ENCODE measurements at regions of chr14 and their contacts with region 1.

Region 1: DNA sequence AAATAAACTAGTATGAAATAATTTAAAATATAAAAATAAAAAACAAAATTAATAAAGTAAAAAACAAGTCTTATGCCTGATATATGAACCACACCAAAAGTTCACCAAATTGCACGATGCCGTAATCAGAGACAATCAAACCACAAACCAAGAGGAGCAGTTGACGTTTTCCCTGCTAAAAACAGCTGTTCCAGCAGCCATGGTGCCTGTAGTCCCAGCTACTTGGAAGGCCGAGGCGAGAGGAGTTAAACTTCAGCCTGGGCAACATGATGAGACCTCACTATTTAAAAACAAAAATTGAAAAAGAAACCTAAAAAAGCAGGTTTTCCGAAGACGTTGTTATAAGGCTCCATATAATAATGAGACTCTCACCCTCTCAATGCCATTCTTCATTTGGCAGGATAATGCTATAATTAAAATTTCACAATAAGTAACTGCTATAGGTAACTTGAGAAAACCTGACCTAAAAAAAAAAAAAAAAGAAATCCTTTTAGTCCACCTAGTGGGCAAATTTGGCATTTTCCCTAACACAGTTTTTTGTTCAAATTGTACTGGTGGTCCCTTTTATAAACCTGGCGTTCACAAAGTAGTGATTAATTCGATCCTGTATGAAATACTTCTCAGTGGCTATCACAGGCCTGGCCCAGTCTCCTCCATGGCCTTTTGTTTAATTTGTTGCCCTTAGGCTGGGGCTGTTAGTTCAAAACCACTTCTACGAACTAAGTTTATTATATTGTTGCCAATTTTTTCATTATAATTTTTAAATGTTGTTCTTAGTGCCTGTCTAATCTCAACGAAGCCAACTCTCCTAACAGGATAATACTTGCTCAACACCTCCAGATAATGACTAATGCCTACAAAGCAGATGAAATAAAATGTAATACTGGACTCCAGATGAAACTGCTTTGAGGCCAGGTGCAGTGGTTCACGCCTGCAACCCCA is 62.1 kb downstream of the TNFAIP2 start:
- DNase-seq: peak; percentile 62
- H3K4me3 ChIP-seq: no peak overlapping the region
- H3K27ac ChIP-seq: no peak overlapping the region
- H3K4me1 ChIP-seq: no peaks in the 10 kb centered on the region
- CTCF ChIP-seq: peak; percentile 85

Region 2: GRCh38 chr14:103078093-103078749 is 107.1 kb before region 1 on chr14:
- CTCF ChIA-PET with region 1: no interaction called
- POLR2A ChIA-PET with region 1: interaction called, 3 read pairs
- intact Hi-C with region 1: loop called (anchors 1 kb)
- DNase-seq: peak; percentile 83
- H3K4me3 ChIP-seq: no peak overlapping the region
- H3K27ac ChIP-seq: no peak overlapping the region
- H3K4me1 ChIP-seq: peaks cover 4% of the 10 kb centered on the region
- CTCF ChIP-seq: peak; percentile 80

Region 3: DNA sequence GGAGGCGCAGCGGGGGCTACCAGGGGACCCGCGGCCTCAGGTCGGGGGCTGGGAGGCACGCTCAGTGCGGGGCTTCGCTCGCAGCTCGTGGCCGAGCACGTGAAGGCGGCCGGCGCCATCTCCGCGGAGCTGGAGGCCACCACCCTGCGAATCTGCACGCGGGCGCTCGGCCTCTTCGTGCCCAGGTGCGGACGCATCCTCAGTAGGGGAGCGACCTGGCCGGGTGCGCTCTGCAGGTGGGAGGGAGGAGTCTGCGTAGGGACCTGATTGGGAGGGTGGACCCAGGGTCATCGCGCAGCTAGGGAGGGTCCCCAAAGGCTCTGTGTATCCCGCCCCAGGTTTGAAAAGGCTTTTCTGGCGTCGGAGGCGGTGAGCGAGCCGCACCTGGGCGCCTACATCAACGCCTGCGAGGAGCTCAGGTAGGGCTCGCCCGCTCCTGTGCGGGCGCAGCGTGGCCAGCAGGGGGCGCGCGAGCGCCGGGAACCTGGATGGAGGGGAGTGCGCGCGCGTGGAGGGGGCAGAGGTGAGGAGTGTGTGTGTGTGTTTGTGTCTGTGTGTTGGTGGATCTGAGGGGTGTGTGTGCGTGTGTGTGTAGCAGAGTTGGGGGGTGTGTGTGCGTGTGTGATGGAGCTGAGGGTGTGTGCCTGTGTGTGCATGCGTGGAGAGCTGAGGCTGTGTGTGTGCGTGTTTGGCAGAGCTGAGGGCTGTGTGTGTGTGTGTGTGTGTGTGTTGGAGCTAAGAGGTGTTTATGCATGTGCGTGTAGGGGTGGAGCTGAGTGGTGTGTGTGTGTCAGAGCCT is 80.5 kb before region 1 on chr14:
- CTCF ChIA-PET with region 1: interaction called, 6 read pairs
- POLR2A ChIA-PET with region 1: no interaction called
- intact Hi-C with region 1: loop called (anchors 1 kb)
- DNase-seq: peak; percentile 66
- H3K4me3 ChIP-seq: peak overlapping the region; percentile 13
- H3K27ac ChIP-seq: peak overlapping the region; percentile 62
- H3K4me1 ChIP-seq: peaks cover 34% of the 10 kb centered on the region
- CTCF ChIP-seq: peak; percentile 92

Region 4: DNA sequence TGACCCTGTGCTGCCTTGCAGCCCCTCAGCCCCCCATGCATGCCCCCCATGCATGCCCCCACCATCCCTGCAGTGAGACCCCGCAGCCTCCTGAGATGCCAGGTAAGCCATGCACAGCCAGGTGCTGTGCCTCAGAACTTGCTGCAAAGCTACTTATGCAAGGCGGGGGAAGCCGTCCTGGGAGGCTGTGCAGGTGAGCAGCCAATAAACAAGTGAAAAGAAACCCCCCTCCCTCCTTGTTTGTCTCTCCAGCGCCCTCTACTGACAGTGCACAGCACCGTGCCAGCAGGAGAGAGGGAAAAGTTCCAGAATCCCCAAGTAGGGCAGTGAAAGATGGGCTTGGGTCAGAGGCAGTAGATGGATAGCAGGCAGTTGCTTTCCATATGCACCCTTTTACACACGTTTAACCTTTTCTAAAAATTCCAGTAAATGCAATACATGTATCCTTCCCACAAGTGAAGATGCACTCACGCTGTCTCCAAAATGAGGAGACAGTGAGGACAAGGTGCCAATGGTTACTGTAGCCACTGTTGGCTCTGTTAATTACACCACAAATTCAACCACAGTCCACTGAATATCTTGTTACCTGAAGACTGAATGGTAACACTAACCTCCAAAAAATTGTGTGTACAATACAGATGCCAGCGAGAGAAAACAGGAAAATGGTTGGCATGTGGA is 44.1 kb before region 1 on chr14:
- CTCF ChIA-PET with region 1: no interaction called
- POLR2A ChIA-PET with region 1: no interaction called
- intact Hi-C with region 1: loop called (anchors 2 kb)
- DNase-seq: peak; percentile 91
- H3K4me3 ChIP-seq: peak overlapping the region; percentile 58
- H3K27ac ChIP-seq: peak overlapping the region; percentile 91
- H3K4me1 ChIP-seq: peaks cover 34% of the 10 kb centered on the region
- CTCF ChIP-seq: peak; percentile 96

Region 5: DNA sequence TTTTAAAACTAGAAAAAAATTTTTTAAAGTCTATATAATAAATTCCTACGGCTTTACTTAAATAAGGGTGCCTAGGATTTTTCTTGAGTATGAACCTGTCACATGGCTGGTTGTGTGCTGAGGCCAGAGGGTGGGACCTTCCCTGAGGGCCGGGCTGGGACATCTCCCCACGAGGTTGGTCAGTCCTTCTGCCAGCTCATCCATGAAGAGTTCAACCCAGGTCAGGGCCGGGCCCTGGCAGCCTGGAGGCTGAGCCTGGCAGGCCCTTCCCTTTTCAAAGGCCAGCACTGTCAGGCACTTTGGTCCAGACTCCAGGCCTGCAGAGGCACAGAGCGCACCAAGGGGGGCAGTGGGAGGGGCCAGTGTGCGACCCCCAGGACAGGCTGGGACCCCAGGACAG is 30.3 kb before region 1 on chr14:
- CTCF ChIA-PET with region 1: no interaction called
- POLR2A ChIA-PET with region 1: no interaction called
- intact Hi-C with region 1: no loop called
- DNase-seq: no peak
- H3K4me3 ChIP-seq: no peak overlapping the region
- H3K27ac ChIP-seq: no peak overlapping the region
- H3K4me1 ChIP-seq: no peaks in the 10 kb centered on the region
- CTCF ChIP-seq: no peak

Region 6: DNA sequence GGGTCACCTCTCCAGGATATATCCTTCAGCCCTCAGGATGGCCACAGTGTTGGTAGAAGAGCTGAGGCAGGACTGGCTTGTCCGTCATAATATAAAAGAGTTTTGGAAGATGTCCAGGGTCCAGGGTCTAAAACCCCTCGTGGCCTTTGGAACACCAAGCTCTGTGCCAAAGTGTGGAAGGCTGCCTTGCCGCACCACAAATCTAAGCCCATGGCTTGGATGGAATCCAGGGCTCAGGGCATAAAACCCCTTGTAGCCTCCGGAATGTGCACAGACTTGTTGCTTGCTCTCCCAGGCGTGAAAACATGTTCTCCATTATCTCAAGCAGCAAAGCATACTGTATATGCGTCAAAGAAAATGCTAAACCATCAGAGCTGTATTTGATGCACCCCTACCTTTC is 15.4 kb before region 1 on chr14:
- CTCF ChIA-PET with region 1: no interaction called
- POLR2A ChIA-PET with region 1: no interaction called
- intact Hi-C with region 1: no loop called
- DNase-seq: no peak
- H3K4me3 ChIP-seq: no peak overlapping the region
- H3K27ac ChIP-seq: no peak overlapping the region
- H3K4me1 ChIP-seq: no peaks in the 10 kb centered on the region
- CTCF ChIP-seq: no peak

Region 7: GRCh38 chr14:103292426-103293374 is 107.4 kb after region 1 on chr14:
- CTCF ChIA-PET with region 1: no interaction called
- POLR2A ChIA-PET with region 1: no interaction called
- intact Hi-C with region 1: loop called (anchors 10 kb)
- DNase-seq: peak; percentile 63
- H3K4me3 ChIP-seq: no peak overlapping the region
- H3K27ac ChIP-seq: no peak overlapping the region
- H3K4me1 ChIP-seq: no peaks in the 10 kb centered on the region
- CTCF ChIP-seq: peak; percentile 87

Measured in OCI-LY7 (cell line).